ENCODE measurements at regions of chr3 and their contacts with region 1.

Region 1: DNA sequence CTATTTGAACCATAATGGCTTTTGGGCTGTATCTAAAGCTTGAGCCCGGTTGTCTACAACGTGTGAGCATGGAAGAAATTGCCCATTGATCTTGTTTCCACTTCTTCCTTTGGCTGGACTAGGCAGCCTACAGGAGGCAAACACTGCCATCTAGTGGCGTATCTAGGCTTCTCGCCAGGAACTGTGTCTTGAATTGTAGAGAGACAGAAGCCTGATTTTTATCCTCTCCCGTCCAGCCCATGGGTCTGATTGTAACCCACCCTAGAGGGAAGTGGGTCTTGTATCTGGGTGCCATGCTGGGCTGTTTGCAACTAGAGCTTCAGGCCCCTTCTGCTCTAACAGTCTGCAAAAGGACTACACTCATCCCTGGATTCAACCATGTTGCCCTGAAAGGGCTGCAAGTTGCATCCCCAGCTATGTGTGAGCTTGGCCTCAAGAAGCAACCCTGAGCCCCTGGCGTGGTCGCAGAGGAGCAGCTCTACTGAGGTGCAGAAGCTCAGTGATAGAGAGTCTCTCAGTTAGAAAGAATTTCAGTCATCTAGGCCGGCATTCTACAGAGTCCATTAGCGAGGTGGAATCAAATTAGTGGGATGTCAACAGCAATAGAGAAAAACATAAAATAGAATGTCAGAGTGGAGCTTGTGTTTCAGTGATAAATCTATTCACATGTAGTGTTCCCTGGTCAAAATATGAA is 170.2 kb upstream of the UMPS start:
- DNase-seq: peak; percentile 69
- ATAC-seq: peak; percentile 81 to 84

Region 2: GRCh38 chr3:123834631-123835030 is 725.4 kb before region 1 on chr3:
- intact Hi-C with region 1: no loop called
- DNase-seq: no peak
- ATAC-seq: no peak

Region 3: GRCh38 chr3:124014366-124014942 is 545.6 kb before region 1 on chr3:
- intact Hi-C with region 1: loop called in 1 of 2 experiments (anchors 10 kb)
- DNase-seq: peak; percentile 27
- ATAC-seq: peak in 1 of 2 donors; percentile 56

Region 4: DNA sequence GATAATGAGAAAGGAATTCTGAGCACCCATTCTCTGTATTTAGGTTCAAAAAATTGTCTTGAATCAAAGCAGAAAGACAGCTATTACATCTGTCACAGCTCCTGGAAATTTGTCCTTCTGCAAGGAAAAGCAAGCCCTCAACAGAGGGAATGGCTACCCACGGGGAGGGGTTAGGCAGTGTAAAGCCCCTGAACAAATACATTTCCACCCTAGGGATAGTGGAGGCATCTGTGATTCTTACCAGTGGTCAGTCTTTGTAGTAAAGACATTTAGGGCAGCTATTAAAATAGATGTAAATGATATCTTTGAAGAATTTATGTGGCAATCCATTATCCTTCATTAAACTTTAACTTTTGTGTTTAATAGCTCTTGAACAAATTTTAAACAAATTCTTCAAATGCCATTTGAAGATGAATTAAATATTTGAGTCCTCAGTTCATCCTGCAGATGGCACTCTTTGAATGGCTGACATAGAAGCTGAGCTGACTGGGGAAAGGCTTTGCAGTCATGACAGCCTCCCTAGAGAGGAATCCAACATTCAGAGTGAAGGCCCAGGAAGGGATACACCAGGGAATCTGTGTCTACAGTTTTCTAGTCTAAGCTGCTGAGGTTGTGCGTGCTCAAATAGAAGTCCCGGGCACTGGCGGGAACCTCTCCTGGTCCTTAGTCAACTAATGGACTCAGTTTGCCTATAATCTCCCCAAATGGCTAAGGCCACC is 208.4 kb before region 1 on chr3:
- intact Hi-C with region 1: loop called (anchors 5 to 10 kb)
- DNase-seq: no peak
- ATAC-seq: peak; percentile 82 to 89

Region 5: GRCh38 chr3:124688581-124689454 is 128.8 kb after region 1 on chr3:
- intact Hi-C with region 1: loop called (anchors 1 to 2 kb)
- DNase-seq: peak; percentile 79
- ATAC-seq: peak; percentile 91